Heart left ventricle (tissue), 16 donors: ENCODE measurements at regions of chr22 and their contacts with region 1.

Region 1: DNA sequence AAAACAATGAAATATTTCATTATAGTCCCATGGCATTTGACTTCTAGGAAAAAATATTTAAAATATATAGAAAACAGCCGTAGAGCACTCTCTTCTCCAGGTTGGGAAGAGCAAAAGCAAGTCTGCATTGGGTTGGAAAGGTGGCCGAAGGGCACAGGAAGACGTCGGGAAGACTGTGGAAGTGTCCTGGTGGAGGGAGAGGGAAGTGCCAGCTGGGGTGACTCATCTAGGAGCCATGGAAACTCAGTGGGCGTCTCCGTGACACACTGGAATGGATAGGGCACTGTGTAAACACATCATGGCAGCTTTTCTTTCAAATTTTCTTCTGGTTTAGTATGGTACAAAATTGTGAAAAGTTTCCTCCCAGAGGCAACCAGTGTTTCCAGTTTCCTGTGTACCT is 12.7 kb downstream of the GTPBP1 start:
- DNase-seq: peak in 2 of 5 donors; percentile 36 to 63
- ATAC-seq: peak in 3 of 4 donors; percentile 66 to 89 (median 86)
- H3K4me3 ChIP-seq: no peak overlapping the region
- H3K27ac ChIP-seq: peak overlapping the region in 2 of 12 donors; percentile 25 to 49
- H3K4me1 ChIP-seq: peaks cover 0 to 28% (median 17%) of the 10 kb centered on the region in 12 donors
- H3K27me3 ChIP-seq: no peaks in the 10 kb centered on the region
- CTCF ChIP-seq: peak in 8 of 12 donors; percentile 21 to 60 (median 34)
- POLR2A ChIP-seq: no peak

Region 2: DNA sequence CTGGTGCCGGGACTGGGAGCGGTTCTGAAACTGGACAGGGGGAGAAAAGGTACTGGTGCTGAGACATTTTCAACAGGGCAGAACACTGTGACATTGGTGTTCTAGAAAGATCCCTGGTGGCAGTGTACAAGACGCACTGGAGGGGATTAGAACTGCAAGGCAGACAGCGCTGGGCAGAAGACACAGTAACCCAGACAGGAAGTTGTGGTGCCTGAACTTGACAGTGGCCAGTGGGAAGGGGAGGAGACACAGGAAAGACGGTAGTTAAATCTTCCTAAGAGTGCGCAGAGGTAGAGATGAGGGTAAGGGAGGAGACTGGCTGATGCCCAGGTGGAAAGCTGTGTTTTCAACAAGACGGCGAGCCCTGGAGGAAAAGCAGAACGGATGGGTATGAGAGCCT is 86.7 kb before region 1 on chr22:
- intact Hi-C with region 1: no loop called
- DNase-seq: no peak
- ATAC-seq: no peak
- H3K4me3 ChIP-seq: no peak overlapping the region
- H3K27ac ChIP-seq: no peak overlapping the region
- H3K4me1 ChIP-seq: peaks cover 0 to 3% (median 0%) of the 10 kb centered on the region in 12 donors
- H3K27me3 ChIP-seq: no peaks in the 10 kb centered on the region
- CTCF ChIP-seq: no peak
- POLR2A ChIP-seq: no peak

Region 3: DNA sequence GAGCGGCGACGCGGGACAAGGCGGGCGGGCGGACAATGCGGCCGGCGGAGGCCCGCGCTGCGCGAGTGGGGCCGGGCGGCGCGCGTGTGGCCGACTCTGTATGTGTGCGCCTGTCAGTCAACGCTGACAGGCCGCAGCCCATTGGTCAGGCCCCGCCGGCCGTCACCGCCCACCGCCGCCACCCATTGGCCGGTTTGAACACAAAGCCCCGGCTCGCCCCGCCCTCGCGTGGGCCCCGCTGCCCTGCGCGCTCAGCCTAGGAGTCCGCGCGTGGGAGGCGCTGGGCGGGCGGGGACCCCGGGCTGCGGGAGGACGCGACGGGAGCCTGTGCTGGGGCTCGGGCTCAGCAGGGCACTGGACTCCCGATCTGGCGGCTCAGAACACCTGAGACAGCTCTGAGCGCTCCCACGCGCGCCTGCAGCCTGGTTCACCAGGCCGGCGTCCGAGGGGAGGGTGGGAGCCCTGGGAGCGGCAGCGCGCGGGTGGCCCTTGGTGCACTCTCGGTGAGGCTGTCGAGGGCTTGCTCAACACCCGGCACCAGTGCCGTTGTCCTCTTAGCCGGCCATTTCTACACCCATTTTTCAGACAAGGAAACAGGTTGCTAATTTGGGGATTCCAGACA is 37.6 kb after region 1 on chr22 and contains the start of gene SUN2:
- intact Hi-C with region 1: loop called in 1 of 10 experiments (anchors 5 kb)
- DNase-seq: peak; percentile 95 to 98 (median 96)
- ATAC-seq: peak; percentile 76 to 88 (median 87)
- H3K4me3 ChIP-seq: peak within 1 kb of the TSS; percentile 34 to 92 (median 72)
- H3K27ac ChIP-seq: peak within 1 kb of the TSS; percentile 92 to 99 (median 97)
- H3K4me1 ChIP-seq: peaks cover 0 to 55% (median 27%) of the 10 kb centered on the region in 12 donors
- H3K27me3 ChIP-seq: no peaks in the 10 kb centered on the region
- CTCF ChIP-seq: peak in 1 of 12 donors; percentile 9
- POLR2A ChIP-seq: peak in 1 of 2 donors; percentile 78
- total RNA-seq, gene SUN2: 75.2 to 405 (median 125) TPM